ENCODE measurements at regions of chr17 and their contacts with region 1.

Region 1: GRCh38 chr17:79839363-79840268 is at the start of gene CBX4:
- DNase-seq: peak; percentile 95 to 96
- H3K4me3 ChIP-seq: peak within 1 kb of the TSS; percentile 74 to 96 (median 80)
- H3K27ac ChIP-seq: peak within 1 kb of the TSS; percentile 92 to 98
- H3K4me1 ChIP-seq: peaks cover 29 to 42% of the 10 kb centered on the region in 2 donors
- H3K27me3 ChIP-seq: peaks cover 11 to 37% of the 10 kb centered on the region in 2 donors
- CTCF ChIP-seq: peak; percentile 67 to 77 (median 71)
- POLR2A ChIP-seq: peak; percentile 34
- total RNA-seq, gene CBX4: 11.5 to 20.6 (median 13.4) TPM

Region 2: GRCh38 chr17:77909236-77909635 is 1930.4 kb before region 1 on chr17:
- intact Hi-C with region 1: no loop called
- DNase-seq: peak; percentile 35 to 54
- H3K4me3 ChIP-seq: peak overlapping the region in 2 of 3 donors; percentile 9 to 42
- H3K27ac ChIP-seq: no peak overlapping the region
- H3K4me1 ChIP-seq: no peaks in the 10 kb centered on the region
- H3K27me3 ChIP-seq: peaks cover 0 to 27% of the 10 kb centered on the region in 2 donors
- CTCF ChIP-seq: no peak
- POLR2A ChIP-seq: no peak

Region 3: DNA sequence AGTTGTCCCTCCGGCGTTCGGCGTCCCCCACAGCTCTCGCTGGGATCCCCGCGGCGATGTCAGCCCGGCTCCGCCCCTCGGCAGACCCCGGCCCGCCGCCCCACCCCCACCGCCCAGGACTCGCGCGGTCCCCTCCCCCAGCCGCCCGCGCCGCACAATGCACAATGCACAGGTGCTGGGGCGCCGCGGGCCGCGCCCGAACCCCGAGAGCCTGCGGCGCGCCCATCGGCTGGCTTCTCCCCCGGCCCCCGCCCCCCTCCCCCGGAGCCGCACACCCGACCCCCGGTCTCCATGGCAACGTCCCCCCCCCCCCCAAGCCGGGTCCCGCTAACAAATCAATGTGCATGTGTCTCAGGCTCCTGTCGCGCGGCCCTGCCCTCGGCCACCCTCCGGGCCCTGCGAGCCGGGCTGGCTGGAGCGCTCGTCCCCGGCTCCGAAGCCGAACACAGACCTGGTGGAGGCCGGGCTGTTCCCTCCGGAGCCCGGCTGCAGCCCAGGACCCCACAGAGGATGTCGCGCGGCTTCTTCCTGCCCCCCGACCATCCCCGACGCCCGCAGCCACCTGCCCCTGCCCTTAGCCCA is 42.0 kb before region 1 on chr17:
- intact Hi-C with region 1: loop called (anchors 1 kb)
- DNase-seq: no peak
- H3K4me3 ChIP-seq: peak overlapping the region; percentile 62 to 93 (median 76)
- H3K27ac ChIP-seq: peak overlapping the region; percentile 88
- H3K4me1 ChIP-seq: peaks cover 3 to 34% of the 10 kb centered on the region in 2 donors
- H3K27me3 ChIP-seq: peaks cover 19 to 60% of the 10 kb centered on the region in 2 donors
- CTCF ChIP-seq: no peak
- POLR2A ChIP-seq: no peak

Region 4: DNA sequence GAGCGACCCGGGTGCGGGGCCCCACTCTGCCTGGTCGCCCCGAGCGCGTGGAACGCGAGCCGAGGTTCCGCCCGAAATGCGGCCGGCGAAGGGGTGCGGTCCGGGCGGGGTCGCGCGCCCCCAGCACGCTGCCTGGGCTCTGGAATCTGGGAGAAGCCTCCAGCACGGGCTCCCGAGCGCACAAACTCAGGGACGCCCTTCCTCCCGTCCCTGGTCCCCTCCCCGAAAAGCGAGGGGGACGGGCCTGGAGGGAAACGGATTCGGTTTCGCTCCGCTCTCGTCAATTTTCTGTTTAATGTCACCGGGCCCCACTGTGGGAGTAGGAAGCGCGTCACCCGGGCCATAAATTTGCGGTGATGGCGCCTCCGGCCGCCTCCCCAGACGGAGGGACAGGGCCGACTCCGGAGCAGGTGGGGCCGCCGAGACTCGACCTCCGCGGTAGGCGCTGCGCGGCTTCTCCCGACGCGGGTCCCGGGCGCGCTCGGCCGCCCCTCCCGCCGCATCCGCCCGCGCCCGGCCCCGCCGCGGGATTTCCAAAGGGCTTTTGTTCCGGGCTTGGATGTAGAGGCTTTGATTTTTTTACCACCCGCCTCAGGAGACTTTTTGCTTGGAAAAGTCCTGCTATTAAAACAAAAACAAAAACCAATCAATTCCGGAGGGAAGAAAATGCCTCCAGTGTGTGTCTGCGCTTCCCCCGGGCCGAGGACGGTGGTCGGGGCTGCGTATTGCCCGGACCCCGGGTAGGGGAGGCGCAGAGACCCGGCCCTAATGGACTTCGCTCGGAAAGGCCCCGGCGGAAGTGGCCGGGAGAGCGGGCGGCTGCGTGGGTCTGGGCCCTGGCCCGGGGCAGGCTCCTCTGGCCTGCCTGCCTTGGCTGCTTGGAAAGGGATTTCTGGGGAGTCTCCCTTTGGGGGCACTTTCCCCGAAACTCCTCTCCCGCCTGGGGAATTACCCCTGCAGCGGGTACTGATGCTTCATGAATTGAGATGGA is 1547.8 kb after region 1 on chr17:
- intact Hi-C with region 1: loop called (anchors 5 kb)
- DNase-seq: no peak
- H3K4me3 ChIP-seq: peak overlapping the region; percentile 75 to 94 (median 87)
- H3K27ac ChIP-seq: peak overlapping the region; percentile 94 to 96
- H3K4me1 ChIP-seq: peaks cover 5 to 6% of the 10 kb centered on the region in 2 donors
- H3K27me3 ChIP-seq: no peaks in the 10 kb centered on the region
- CTCF ChIP-seq: no peak
- POLR2A ChIP-seq: peak; percentile 12

Measured in breast epithelium (tissue), 4 donors.